HepG2 (cell line): ENCODE measurements at regions of chr11 and their contacts with region 1.

Region 1: GRCh38 chr11:24386546-24387397 is 110.1 kb upstream of the LUZP2 start:
- DNase-seq: peak; percentile 12
- ATAC-seq: no peak
- H3K4me3 ChIP-seq: no peak overlapping the region
- H3K27ac ChIP-seq: no peak overlapping the region
- H3K4me1 ChIP-seq: no peaks in the 10 kb centered on the region
- H3K27me3 ChIP-seq: no peaks in the 10 kb centered on the region; a peak in 1 of 5 replicates
- CTCF ChIP-seq: peak; percentile 33
- EP300 ChIP-seq: no peak
- POLR2A ChIP-seq: no peak
- RAD21 ChIP-seq: no peak

Region 2: DNA sequence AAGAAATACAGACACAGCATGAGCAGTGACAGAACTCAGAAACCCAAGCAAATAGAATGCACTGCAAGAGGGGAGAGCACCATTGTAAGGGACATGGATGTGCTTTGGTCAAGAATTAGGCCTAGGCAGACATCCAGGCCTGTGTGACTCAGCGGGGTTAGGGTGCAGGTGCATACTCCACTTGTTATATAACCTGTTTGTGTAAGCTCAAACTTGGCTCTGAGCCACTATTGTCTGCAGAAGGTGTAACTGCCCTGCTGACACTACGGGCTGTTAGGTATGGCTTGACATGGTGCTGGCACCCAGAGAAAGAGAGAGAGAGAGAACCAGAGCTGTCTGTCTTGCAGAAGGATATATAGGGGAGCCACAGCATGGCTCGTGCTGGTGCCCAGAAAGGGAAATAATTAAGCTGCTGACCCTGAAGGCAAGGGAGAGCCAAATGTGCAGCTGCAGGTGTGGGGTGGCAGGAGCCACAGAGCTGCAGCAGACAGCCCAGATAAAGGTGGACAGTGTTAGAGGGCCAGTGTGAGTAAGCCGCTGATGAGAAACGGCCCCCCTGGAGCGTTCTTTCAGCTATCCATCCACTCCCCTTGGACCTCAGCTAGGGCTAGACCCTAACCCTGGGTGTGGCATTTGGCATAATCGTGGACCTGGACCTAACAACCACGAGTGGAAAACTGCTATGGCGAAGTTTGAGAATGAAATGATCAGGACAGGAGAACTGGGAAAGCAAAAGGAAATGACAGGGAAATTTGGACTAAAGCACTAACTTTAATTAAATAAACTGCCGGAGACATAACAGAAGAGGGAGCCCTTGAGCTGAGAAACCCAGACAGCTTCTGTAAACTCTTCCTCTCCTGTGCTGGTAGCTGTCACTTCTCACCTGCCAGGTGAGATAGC is 1273.5 kb before region 1 on chr11:
- CTCF ChIA-PET with region 1: no interaction called
- POLR2A ChIA-PET with region 1: no interaction called
- in situ Hi-C with region 1: loop called (anchors 25 kb)
- intact Hi-C with region 1: loop called (anchors 1 kb)
- DNase-seq: peak; percentile 69
- ATAC-seq: peak; percentile 93
- H3K4me3 ChIP-seq: peak overlapping the region in 1 of 3 experiments; percentile 44; a peak in 2 of 6 replicates
- H3K27ac ChIP-seq: no peak overlapping the region
- H3K4me1 ChIP-seq: peaks cover 13% of the 10 kb centered on the region
- H3K27me3 ChIP-seq: no peaks in the 10 kb centered on the region
- CTCF ChIP-seq: peak; percentile 67
- EP300 ChIP-seq: peak in 1 of 2 experiments; percentile 45; a peak in 2 of 4 replicates
- POLR2A ChIP-seq: no peak
- RAD21 ChIP-seq: peak; percentile 37; the same call in 1 of the 2 replicates

Region 3: GRCh38 chr11:23540101-23540561 is 846.6 kb before region 1 on chr11:
- CTCF ChIA-PET with region 1: no interaction called
- POLR2A ChIA-PET with region 1: no interaction called
- in situ Hi-C with region 1: loop called (anchors 25 kb)
- intact Hi-C with region 1: loop called (anchors 1 kb)
- DNase-seq: peak; percentile 44
- ATAC-seq: peak; percentile 96
- H3K4me3 ChIP-seq: no peak overlapping the region
- H3K27ac ChIP-seq: no peak overlapping the region
- H3K4me1 ChIP-seq: no peaks in the 10 kb centered on the region
- H3K27me3 ChIP-seq: no peaks in the 10 kb centered on the region
- CTCF ChIP-seq: peak; percentile 74
- EP300 ChIP-seq: no peak
- POLR2A ChIP-seq: no peak
- RAD21 ChIP-seq: 0 out of 2 replicates have a peak, but pooled peaks have one; percentile 16